Head of caudate nucleus (tissue), 42 donors: ENCODE measurements at regions of chr7 and their contacts with region 1.

Region 1: DNA sequence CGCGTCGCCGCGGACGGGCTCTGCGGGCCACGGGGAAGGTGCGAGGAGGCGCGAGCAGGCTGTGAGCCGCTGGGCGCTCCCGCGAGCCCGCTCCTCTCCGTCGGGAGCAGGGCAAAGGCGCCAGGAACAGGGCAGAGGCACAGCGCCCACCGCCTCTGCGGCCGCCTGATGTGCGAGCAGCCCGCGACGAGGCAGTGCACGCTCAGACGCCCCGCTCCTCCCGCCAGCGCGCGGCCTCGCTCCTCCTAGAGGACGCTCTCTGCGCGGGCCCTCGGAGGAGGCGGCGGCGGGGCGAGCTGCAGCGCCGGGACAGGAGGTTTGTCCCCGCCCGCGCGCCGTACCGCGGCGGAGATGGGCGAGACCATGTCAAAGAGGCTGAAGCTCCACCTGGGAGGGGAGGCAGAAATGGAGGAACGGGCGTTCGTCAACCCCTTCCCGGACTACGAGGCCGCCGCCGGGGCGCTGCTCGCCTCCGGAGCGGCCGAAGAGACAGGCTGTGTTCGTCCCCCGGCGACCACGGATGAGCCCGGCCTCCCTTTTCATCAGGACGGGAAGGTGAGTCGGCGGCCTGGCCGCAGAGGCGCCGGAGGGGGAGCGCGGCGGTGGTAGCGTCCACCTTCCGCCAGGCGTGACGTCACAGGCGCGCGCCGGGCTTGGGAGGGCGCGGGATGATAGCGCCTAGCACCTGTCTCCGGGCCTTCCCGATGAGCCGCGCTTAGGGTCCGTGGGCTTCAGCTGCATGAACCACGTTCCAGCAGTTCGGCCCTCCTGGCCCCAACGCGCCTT is 731 bp downstream of the LANCL2 start:
- DNase-seq: peak; percentile 82 to 98 (median 96)

Region 2: DNA sequence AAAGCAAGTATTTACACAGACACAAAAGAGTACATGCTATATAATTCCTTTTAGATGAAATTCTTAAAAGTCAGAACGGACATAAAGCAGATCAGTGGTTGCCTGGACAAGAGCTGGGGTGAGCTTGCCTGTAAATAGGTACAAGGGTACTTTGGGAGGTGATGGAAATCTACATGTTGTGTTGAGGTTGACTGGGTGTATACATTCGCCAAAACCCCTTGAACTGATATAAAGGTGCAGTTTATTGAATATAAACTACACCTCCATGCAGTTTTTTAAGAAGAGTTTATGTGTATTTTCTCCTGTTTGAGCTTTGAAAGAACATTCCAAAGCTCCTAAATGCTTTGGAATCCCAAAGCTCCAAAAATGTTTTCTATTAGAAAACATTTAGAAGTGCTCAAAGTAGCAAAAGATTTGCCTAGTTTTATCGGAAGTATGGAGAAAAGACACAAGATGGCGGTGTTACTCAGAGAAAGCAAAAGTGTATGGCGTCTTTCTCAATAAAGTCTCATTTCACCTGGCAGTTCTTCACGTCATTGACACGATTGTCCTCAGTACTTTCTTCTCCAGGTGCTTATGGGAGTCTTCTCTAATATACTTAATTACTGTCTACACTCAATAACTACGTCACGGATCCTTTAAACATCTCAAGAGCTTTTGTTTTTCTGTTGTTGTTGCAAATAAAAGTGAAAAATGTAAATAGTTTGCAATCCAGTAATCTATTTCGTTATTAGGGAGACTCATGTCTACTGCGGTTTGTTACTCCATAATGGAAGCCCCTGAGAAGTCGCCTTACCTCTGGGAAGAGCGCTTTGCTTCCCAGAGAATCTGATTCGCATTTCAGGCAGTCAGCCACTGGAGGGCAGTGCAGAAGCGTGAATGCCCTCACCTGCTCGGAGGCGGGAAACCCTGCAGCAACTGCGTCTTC is 592.1 kb before region 1 on chr7:
- intact Hi-C with region 1: loop called (anchors 10 kb)
- DNase-seq: peak; percentile 73 to 94 (median 86)

Region 3: DNA sequence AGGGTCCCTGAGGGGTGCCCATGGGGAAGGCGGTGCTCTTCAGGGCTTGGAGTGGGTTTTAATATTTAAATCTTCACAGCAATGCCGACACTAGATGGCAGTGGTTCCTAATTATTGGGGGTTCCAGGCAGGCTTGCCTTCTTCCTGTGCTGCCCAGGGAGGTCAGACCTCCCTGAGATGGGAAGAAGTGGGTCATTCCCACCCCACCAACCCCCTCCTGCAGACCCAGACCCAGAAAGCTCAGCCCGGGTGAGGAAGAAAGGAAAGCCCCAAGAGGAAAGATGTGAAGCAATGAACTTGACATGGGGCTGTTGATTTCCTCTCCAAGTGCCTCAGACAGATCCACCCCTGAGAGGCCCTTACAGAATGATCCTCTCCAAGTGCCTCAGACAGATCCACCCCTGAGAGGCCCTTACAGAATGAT is 85.8 kb before region 1 on chr7:
- intact Hi-C with region 1: loop called (anchors 5 kb)
- DNase-seq: peak in 40 of 42 donors; percentile 38 to 88 (median 68)

Region 4: DNA sequence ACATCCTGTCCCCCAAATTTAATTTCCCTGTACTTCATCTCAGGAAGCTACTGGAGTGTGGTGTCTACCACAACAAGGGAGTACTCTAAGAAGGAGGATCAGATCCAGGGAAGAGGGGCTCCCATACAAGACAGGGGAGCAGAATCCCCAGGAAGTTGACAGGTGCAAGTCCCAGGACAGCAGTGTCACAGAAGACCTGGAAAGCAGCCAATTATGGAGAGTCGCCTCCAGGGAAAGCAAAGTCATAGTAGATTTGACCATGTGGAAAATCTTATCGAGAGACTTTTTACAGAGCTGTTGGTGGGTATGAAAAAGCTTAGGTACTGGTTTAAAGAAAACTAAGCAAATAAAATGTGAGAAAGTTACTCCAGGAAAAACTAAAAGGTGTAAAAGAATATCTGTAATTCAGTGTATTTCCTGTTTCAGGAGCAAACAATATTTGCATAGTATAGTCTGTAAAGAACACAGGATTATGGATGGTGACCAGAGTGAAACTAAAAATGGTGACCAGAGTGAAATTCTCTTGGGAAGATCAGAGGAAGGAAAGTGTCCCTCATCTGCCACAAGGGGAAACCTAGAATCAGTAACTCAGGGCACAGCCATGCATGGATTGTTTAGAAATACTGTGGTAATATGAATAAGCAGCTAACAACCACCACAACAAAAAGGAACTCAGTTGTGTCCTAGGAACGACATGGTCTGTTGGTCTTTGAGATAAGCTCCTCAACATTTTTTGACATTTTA is 43.8 kb after region 1 on chr7:
- intact Hi-C with region 1: loop called (anchors 5 kb)
- DNase-seq: no peak

Region 5: DNA sequence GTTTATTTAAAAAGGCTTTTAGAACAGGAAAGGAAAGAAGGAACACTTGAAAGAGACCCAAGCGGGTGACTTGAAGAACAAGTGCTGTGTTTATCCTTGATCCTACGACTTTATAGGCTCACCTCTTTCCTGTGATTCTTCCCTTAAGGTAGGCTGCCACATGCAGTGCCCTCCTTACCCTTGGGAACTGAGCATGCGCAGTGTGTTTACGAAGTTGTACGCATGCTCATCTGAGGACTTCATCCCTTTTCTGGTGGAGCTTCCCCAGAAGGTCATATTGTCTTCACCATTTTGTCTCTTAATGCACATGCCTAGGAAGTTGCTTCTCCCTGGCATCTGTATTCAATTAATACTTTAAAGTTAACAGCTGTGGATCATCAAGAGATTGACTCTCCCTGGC is 256.4 kb after region 1 on chr7:
- intact Hi-C with region 1: no loop called
- DNase-seq: no peak